IMR-90 (cell line): ENCODE measurements at regions of chr12 and their contacts with region 1.

Region 1: GRCh38 chr12:48350249-48351021 is at the start of gene ZNF641:
- DNase-seq: peak; percentile 48
- ATAC-seq: peak; percentile 94
- H3K4me3 ChIP-seq: peak within 1 kb of the TSS; percentile 98
- H3K27ac ChIP-seq: peak within 1 kb of the TSS; percentile 65
- H3K4me1 ChIP-seq: no peaks in the 10 kb centered on the region; the same call in 1 of the 2 replicates
- H3K27me3 ChIP-seq: 0 out of 2 replicates have a peak, but pooled peaks cover 2% of the 10 kb centered on the region
- CTCF ChIP-seq: no peak
- POLR2A ChIP-seq: no peak
- RAD21 ChIP-seq: no peak
- total RNA-seq, gene ZNF641: 3.9 and 5.2 TPM in 2 replicates

Region 2: GRCh38 chr12:48197971-48198671 is 152.3 kb before region 1 on chr12:
- CTCF ChIA-PET with region 1: no interaction called
- POLR2A ChIA-PET with region 1: no interaction called
- dilution Hi-C with region 1: no loop called
- in situ Hi-C with region 1: no loop called
- intact Hi-C with region 1: loop called (anchors 5 kb)
- DNase-seq: peak; percentile 87
- ATAC-seq: peak; percentile 92
- H3K4me3 ChIP-seq: peak overlapping the region; percentile 55
- H3K27ac ChIP-seq: peak overlapping the region; percentile 77
- H3K4me1 ChIP-seq: peaks cover 6% of the 10 kb centered on the region; the same call in 1 of the 2 replicates
- H3K27me3 ChIP-seq: peaks cover 7% of the 10 kb centered on the region
- CTCF ChIP-seq: 0 out of 2 replicates have a peak, but pooled peaks have one; percentile 12
- POLR2A ChIP-seq: peak; percentile 67
- RAD21 ChIP-seq: no peak